ENCODE measurements at regions of chrX and their contacts with region 1.

Region 1: DNA sequence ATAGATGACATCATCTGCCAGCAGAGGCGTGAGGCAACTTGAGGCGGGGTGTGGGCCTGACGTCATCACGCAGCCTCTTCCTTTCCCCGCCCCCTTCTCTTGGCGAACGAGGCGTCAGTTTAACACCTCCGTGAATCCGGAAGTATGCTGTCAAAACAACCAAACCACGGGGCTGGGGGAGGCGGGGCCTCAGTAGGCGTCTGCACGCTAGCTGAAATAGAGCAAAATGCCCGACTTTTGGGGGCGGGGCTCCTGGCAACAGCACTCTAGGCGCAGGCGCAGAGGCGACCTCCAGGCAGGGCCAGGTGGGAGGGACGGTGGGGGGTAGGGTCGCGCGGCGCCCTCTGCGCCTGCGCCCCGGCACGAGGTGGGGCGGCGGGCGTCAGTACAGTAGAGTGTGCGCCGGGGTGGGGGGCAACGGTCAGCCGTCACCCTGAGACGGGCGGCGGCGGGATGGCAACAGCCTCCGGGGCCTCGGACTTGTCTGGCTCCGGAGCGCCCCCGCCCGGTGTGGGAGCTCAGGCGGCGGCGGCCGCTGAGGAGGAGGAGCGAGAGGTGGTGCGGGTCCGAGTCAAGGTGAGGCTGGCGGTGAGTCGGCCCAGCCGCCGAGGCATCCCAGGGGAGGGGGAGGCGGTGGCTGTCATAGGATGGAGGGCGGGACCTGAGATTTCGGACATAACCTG is at the start of gene TBC1D25:
- DNase-seq: peak; percentile 84
- ATAC-seq: peak; percentile 78
- H3K4me3 Mint-ChIP-seq: peak within 1 kb of the TSS; percentile 92
- H3K27ac Mint-ChIP-seq: peak within 1 kb of the TSS; percentile 95
- H3K4me1 Mint-ChIP-seq: peaks cover 20% of the 10 kb centered on the region
- H3K27me3 Mint-ChIP-seq: no peaks in the 10 kb centered on the region
- CTCF ChIP-seq: no peak
- total RNA-seq, gene TBC1D25: 16.4 and 19.4 TPM in 2 replicates

Region 2: GRCh38 chrX:48475774-48476577 is 63.5 kb before region 1 on chrX and contains the start of gene FTSJ1:
- CTCF ChIA-PET with region 1: interaction called, 4 read pairs
- POLR2A ChIA-PET with region 1: interaction called, 6 read pairs
- intact Hi-C with region 1: loop called (anchors 1 kb)
- DNase-seq: peak; percentile 70
- ATAC-seq: peak; percentile 87
- H3K4me3 Mint-ChIP-seq: peak within 1 kb of the TSS; percentile 89
- H3K27ac Mint-ChIP-seq: peak within 1 kb of the TSS; percentile 93
- H3K4me1 Mint-ChIP-seq: peaks cover 23% of the 10 kb centered on the region
- H3K27me3 Mint-ChIP-seq: no peaks in the 10 kb centered on the region
- CTCF ChIP-seq: no peak
- total RNA-seq, gene FTSJ1: 39.9 and 44.5 TPM in 2 replicates

Region 3: DNA sequence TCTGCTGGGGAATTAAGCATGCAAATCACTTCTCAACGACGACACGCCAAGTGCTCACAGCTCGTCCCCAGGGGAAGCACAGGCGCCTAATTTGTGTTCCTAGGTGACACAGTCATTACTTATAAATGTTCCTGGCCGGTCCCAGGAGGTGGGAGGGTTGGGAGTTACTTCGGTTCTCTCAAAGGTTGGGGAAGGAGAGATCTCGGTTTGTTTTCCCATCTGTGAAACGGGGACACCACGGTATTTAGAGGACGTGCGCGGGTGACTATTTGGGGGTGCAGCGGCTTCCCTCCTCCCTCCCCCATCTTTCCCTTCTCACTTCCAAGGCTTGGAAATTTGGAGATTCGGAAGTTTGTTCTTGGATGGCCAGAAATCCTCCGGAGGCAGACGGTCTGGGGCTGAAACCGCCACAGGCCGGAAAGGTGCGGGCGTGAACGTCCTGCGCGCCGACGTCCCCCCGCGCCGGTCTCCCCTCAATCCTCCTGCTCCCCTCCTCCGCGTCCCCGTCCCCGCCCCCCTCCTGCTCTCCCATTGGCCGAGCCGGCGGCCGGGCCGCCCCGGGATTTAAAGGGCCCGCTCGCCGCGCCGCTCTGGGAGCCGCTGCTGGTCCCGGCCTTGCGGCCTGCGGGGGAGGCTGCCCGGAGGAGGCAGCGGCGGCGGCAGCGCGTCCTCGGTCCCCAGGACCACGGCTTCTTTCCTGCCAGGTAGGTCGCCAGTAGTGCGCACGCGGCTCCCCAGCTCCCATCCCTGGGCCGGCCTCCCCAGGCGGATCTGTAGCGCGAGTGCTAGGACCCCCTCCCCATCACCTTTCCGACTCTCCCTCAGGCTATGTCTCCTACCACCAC is 30.9 kb before region 1 on chrX and contains the start of gene PORCN:
- CTCF ChIA-PET with region 1: no interaction called
- POLR2A ChIA-PET with region 1: interaction called, 22 read pairs
- intact Hi-C with region 1: loop called (anchors 1 kb)
- DNase-seq: peak; percentile 65
- ATAC-seq: peak; percentile 88
- H3K4me3 Mint-ChIP-seq: peak within 1 kb of the TSS; percentile 91
- H3K27ac Mint-ChIP-seq: peak within 1 kb of the TSS; percentile 91
- H3K4me1 Mint-ChIP-seq: peaks cover 11% of the 10 kb centered on the region
- H3K27me3 Mint-ChIP-seq: no peaks in the 10 kb centered on the region
- CTCF ChIP-seq: no peak
- total RNA-seq, gene PORCN: 7.8 and 9.8 TPM in 2 replicates

Region 4: GRCh38 chrX:48521353-48522243 is 17.9 kb before region 1 on chrX and contains the start of gene EBP:
- CTCF ChIA-PET with region 1: no interaction called
- POLR2A ChIA-PET with region 1: interaction called, 13 read pairs
- intact Hi-C with region 1: loop called (anchors 1 kb)
- DNase-seq: peak; percentile 79
- ATAC-seq: peak; percentile 96
- H3K4me3 Mint-ChIP-seq: peak within 1 kb of the TSS; percentile 86
- H3K27ac Mint-ChIP-seq: peak within 1 kb of the TSS; percentile 88
- H3K4me1 Mint-ChIP-seq: peaks cover 24% of the 10 kb centered on the region
- H3K27me3 Mint-ChIP-seq: no peaks in the 10 kb centered on the region
- CTCF ChIP-seq: no peak
- total RNA-seq, gene EBP: 72.4 and 75.5 TPM in 2 replicates

Region 5: DNA sequence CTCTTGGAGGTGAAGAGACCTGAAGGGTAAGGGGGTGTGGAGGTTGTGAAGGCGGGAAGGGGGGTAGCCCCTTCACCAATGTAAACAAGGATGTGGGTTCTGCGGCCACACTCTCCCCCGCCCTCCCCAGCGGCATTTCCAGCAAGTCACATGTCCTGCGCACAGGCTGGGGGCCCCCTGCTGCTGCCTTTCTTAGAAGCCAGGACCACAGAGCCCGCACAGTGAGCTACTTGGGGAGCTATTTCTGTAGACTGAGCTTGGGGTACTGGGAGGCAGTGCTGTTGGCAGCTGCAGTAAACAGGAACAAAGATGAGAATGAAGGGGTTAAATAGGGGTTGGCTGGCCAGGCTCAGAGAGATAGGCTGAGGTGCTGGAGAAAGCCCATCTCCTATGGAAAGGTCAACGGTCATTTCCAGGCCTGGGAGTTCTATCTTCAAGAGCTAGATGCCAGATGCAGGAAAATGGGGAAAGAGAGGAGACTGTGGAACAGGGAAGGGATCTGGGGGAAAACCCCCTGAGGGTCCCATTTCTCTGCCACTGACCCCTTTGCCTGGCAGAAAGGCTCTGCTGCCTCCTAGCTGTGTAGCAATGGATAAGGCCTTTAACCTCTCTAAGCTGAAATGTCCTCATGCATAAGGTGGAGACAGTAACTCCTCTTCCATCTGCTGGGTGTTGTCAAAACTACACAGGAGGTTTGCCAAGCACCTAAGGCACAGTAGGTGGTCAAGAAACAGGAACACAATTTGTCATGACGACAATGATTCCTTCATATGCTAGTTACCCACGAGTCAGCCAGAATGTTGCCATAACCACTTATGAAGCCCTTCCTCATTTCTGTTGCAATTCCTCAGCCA is 397.8 kb after region 1 on chrX:
- CTCF ChIA-PET with region 1: no interaction called
- POLR2A ChIA-PET with region 1: interaction called, 10 read pairs
- intact Hi-C with region 1: no loop called
- DNase-seq: peak; percentile 68
- ATAC-seq: peak; percentile 54
- H3K4me3 Mint-ChIP-seq: peak overlapping the region; percentile 77
- H3K27ac Mint-ChIP-seq: peak overlapping the region; percentile 98
- H3K4me1 Mint-ChIP-seq: peaks cover 87% of the 10 kb centered on the region
- H3K27me3 Mint-ChIP-seq: no peaks in the 10 kb centered on the region
- CTCF ChIP-seq: no peak